ENCODE measurements at regions of chr21 and their contacts with region 1.

Region 1: GRCh38 chr21:44939532-44940115 is at the start of gene SLX9:
- DNase-seq: peak; percentile 55 to 80
- H3K4me3 ChIP-seq: peak within 1 kb of the TSS; percentile 74
- H3K27ac ChIP-seq: 0 out of 2 replicates have a peak within 1 kb of the TSS, but pooled peaks have one; percentile 34
- H3K4me1 ChIP-seq: peaks cover 18% of the 10 kb centered on the region
- H3K27me3 ChIP-seq: no peaks in the 10 kb centered on the region
- CTCF ChIP-seq: no peak
- total RNA-seq, gene SLX9: 22.8 and 30.4 TPM in 2 replicates

Region 2: DNA sequence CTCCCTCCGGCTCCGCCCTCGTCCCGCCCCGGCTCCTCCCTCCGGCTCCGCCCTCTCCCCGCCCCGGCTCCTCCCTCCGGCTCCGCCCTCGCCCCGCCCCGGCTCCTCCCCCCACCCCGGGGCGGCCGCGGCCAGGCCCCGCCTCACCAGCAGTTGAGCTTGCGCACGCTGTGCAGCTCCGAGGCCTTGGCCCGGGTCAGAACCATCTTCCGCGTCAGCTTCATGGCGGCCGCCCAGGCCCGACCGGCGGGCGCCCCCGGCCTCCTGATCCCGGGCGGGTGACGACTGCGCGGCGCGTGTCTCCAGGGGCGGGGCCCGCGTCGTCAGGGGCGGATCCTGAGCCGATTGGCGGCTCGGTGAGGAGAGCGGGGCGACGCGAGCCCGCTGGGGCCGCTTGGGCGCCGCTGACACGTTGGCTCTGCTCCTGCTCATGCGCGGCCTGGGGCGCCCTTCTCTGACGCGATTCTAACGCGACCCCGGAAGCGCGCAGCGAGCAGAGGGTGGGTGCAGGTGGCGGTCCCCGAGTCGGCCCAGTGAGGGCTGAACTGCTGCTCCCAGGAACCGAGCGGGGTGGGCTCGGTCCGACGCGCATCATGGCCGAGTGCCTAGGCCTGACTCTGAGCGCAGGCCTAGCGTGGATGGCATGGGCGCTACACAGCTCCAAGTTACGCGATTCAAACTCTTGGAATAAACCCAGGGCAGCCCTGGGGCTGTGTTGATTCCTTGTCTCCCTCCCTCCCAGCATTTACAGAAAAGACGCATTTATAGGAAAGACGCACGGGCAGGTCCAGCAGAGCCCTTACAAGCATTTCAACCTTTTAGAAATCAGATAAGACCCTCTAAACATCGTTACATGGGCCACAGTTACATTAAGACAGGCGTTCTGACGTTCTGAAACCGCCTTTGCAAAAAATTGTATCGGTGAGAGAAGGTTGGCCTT is 600.4 kb before region 1 on chr21 and contains the start of gene CFAP410:
- CTCF ChIA-PET with region 1: no interaction called
- POLR2A ChIA-PET with region 1: interaction called, 10 read pairs
- intact Hi-C with region 1: no loop called
- DNase-seq: peak; percentile 77 to 88
- H3K4me3 ChIP-seq: peak within 1 kb of the TSS; percentile 94
- H3K27ac ChIP-seq: peak within 1 kb of the TSS; percentile 92
- H3K4me1 ChIP-seq: peaks cover 11% of the 10 kb centered on the region; the same call in 1 of the 2 replicates
- H3K27me3 ChIP-seq: no peaks in the 10 kb centered on the region
- CTCF ChIP-seq: no peak
- total RNA-seq, gene CFAP410: 12.5 and 23.9 TPM in 2 replicates

Region 3: GRCh38 chr21:44510508-44511210 is 429.0 kb before region 1 on chr21:
- CTCF ChIA-PET with region 1: no interaction called
- POLR2A ChIA-PET with region 1: no interaction called
- intact Hi-C with region 1: loop called (anchors 10 kb)
- DNase-seq: peak in 1 of 2 experiments; percentile 47
- H3K4me3 ChIP-seq: no peak overlapping the region
- H3K27ac ChIP-seq: no peak overlapping the region
- H3K4me1 ChIP-seq: no peaks in the 10 kb centered on the region
- H3K27me3 ChIP-seq: peaks cover 83% of the 10 kb centered on the region
- CTCF ChIP-seq: peak; percentile 73

Region 4: GRCh38 chr21:46038871-46039397 is 1099.3 kb after region 1 on chr21:
- CTCF ChIA-PET with region 1: no interaction called
- POLR2A ChIA-PET with region 1: no interaction called
- intact Hi-C with region 1: no loop called
- DNase-seq: no peak
- H3K4me3 ChIP-seq: no peak overlapping the region
- H3K27ac ChIP-seq: no peak overlapping the region
- H3K4me1 ChIP-seq: no peaks in the 10 kb centered on the region
- H3K27me3 ChIP-seq: no peaks in the 10 kb centered on the region
- CTCF ChIP-seq: no peak

Measured in PC-9 (cell line).